ENCODE measurements at regions of chr9 and their contacts with region 1.

Region 1: DNA sequence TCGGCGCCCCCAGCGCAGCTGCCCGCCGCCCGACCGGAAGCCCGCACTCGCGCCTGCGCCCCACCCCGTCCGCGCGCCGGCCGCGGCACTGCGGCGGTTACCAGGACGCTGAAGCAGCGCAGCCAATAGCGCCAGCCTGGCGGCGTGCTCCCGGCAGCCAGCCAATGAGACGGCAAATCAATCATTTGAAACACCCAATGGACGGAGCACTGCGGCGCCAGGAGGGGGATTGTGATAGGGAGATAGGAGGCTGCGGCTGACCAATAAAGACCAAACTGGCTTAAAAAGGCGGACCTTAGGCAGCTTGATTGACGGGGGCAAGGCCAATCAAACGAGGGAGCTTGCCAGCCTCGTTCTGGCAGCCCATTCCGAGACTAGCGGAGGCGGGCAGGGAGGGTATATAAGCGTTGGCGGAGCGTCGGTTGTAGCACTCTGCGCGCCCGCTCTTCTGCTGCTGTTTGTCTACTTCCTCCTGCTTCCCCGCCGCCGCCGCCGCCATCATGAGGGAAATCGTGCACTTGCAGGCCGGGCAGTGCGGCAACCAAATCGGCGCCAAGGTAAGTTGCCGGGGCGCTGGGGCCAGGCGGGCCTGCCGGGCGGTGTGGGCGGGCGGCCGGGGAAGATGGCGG is at the start of gene TUBB4B:
- DNase-seq: peak; percentile 100
- H3K4me3 ChIP-seq: peak within 1 kb of the TSS; percentile 82 to 94 (median 90)
- H3K4me3 Mint-ChIP-seq: peak within 1 kb of the TSS; percentile 84 to 85
- H3K27ac ChIP-seq: peak within 1 kb of the TSS; percentile 68 to 94
- H3K27ac Mint-ChIP-seq: peak within 1 kb of the TSS; percentile 77 to 93 (median 90)
- H3K4me1 ChIP-seq: peaks cover 49 to 63% of the 10 kb centered on the region in 2 donors
- H3K4me1 Mint-ChIP-seq: peaks cover 47% of the 10 kb centered on the region
- H3K27me3 ChIP-seq: no peaks in the 10 kb centered on the region
- H3K27me3 Mint-ChIP-seq: peaks cover 1 to 3% (median 2%) of the 10 kb centered on the region in 3 donors
- CTCF ChIP-seq: no peak
- polyA plus RNA-seq, gene TUBB4B: 58.1 to 284 (median 70.8) TPM

Region 2: DNA sequence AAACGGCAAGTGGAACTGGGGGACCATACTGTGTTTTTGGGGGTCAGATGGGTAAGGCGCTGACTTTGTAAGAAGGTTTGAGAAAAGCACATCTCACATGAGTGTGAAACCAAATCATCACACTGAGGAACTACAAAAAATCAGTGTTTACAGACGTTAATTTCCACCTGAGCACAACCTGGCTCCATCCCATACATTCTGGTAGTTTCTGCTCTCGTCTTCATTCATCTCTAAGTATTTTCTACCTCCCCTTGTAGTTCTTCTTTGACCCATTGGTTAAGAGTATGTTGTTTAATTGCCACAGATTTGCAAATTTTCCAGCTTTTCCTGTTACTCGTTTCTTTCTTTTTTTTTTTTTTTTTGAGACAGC is 117.5 kb before region 1 on chr9:
- intact Hi-C with region 1: loop called in 1 of 2 experiments (anchors 5 kb)
- DNase-seq: no peak
- H3K4me3 ChIP-seq: no peak overlapping the region
- H3K4me3 Mint-ChIP-seq: no peak overlapping the region
- H3K27ac ChIP-seq: no peak overlapping the region
- H3K27ac Mint-ChIP-seq: peak overlapping the region in 1 of 7 donors; percentile 72
- H3K4me1 ChIP-seq: peaks cover 22% of the 10 kb centered on the region in 2 donors
- H3K4me1 Mint-ChIP-seq: peaks cover 19% of the 10 kb centered on the region
- H3K27me3 ChIP-seq: peaks cover 0 to 2% of the 10 kb centered on the region in 2 donors
- H3K27me3 Mint-ChIP-seq: peaks cover 3 to 7% (median 5%) of the 10 kb centered on the region in 3 donors
- CTCF ChIP-seq: no peak

Region 3: DNA sequence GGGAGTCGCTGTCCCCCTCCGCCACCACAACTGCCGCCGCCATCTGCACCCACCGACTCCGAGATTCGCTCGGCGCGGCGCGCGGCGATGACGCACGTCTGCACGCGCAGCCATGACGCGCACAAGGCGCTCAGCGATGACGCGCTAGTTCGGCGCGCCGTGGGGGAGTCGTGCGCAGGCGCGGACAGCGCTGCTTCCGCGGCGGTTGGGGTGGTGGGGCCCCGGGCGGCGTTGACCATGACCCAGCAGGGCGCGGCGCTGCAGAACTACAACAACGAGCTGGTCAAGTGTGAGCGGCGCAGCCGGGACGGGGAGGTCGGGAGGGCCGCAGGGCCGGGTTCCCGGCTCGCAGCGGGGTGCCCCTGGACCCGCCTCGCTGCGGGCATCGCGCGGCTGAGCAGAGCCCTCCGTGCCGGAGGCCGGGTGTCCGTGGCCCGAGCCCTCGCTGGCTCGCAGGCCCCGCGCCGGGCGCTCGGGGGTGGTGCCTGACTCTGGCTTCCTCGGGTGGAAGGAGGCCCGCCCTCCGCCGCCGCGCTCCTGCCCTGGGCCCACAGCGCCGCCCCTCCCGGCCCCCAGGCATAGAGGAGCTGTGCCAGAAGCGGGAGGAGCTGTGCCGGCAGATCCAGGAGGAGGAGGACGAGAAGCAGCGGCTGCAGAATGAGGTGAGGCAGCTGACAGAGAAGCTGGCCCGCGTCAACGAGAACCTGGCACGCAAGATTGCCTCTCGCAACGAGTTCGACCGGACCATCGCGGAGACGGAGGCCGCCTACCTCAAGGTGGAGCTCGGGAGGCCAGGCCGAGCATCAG is 52.3 kb before region 1 on chr9 and contains the starts of genes ANAPC2 and SSNA1:
- intact Hi-C with region 1: loop called in 1 of 2 experiments (anchors 5 kb)
- DNase-seq: peak; percentile 94 to 97 (median 95)
- H3K4me3 ChIP-seq: peak within 1 kb of the TSS; percentile 83 to 95 (median 92)
- H3K4me3 Mint-ChIP-seq: peak within 1 kb of the TSS; percentile 88 to 97
- H3K27ac ChIP-seq: peak within 1 kb of the TSS; percentile 83 to 96
- H3K27ac Mint-ChIP-seq: peak within 1 kb of the TSS; percentile 93 to 98 (median 96)
- H3K4me1 ChIP-seq: peaks cover 28 to 39% of the 10 kb centered on the region in 2 donors
- H3K4me1 Mint-ChIP-seq: peaks cover 32% of the 10 kb centered on the region
- H3K27me3 ChIP-seq: no peaks in the 10 kb centered on the region
- H3K27me3 Mint-ChIP-seq: no peaks in the 10 kb centered on the region
- CTCF ChIP-seq: peak; percentile 42
- polyA plus RNA-seq, gene ANAPC2: 1.9 to 76.8 (median 2.0) TPM
- polyA plus RNA-seq, gene SSNA1: 87.0 to 118 (median 98.3) TPM

Region 4: DNA sequence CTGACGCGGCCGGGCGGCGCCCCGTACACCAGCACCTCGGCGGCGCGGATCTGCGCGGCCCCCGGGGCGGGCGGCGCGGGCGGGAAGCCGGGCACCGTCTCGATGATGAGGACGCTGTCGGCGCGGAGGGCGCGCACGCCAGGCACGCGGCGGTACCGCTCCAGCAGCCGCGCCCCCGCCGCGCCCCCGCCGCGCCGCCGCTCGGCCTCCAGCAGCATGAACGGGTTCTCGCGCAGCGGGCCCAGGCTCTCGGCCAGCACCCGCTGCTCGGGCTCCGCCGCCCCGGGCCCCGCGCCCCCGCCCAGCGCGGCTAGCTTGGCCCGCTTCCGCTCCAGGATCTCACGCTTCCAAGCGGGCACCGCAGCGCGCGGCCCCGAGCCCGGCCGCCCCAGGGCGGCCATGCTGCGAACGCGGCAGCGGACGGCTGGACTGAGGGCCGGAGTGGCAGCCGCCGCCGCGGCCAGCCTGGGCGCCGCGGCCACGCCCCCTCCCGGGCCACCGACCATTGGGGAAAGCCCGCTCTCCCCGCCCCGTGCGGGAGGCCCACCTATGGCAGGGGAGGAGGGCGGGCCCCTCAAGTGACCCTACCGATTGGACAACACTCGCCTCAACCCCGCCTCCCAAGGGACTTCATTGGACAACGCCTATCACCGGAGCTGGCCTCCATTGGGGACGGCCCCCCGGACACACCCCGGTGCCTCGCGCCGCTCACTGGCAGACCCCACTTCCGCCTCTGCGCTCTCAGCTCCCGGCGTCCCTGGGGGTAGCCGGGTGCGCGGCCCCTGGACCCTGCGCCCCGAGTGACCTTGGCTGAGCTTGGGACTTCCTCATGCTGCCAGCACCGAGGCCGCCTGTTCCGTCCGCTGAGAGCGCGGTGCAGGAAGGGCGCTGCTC is 40.4 kb before region 1 on chr9 and contains the start of gene TPRN:
- intact Hi-C with region 1: loop called in 1 of 2 experiments (anchors 5 kb)
- DNase-seq: peak; percentile 98 to 100 (median 99)
- H3K4me3 ChIP-seq: peak within 1 kb of the TSS; percentile 47 to 74 (median 68)
- H3K4me3 Mint-ChIP-seq: peak within 1 kb of the TSS; percentile 81 to 88
- H3K27ac ChIP-seq: peak within 1 kb of the TSS; percentile 77 to 89
- H3K27ac Mint-ChIP-seq: peak within 1 kb of the TSS; percentile 77 to 92 (median 89)
- H3K4me1 ChIP-seq: peaks cover 41 to 55% of the 10 kb centered on the region in 2 donors
- H3K4me1 Mint-ChIP-seq: peaks cover 43% of the 10 kb centered on the region
- H3K27me3 ChIP-seq: peaks cover 0 to 4% of the 10 kb centered on the region in 2 donors
- H3K27me3 Mint-ChIP-seq: peaks cover 0 to 4% (median 0%) of the 10 kb centered on the region in 3 donors
- CTCF ChIP-seq: no peak
- polyA plus RNA-seq, gene TPRN: 0.30 to 4.6 (median 0.46) TPM

Region 5: GRCh38 chr9:137254624-137255447 is 13.9 kb after region 1 on chr9 and contains the start of gene NELFB:
- intact Hi-C with region 1: loop called (anchors 1 to 2 kb)
- DNase-seq: peak; percentile 81 to 87 (median 87)
- H3K4me3 ChIP-seq: peak within 1 kb of the TSS; percentile 65 to 94 (median 82)
- H3K4me3 Mint-ChIP-seq: peak within 1 kb of the TSS; percentile 88 to 95
- H3K27ac ChIP-seq: peak within 1 kb of the TSS in 1 of 2 donors; percentile 75
- H3K27ac Mint-ChIP-seq: peak within 1 kb of the TSS; percentile 46 to 91 (median 73)
- H3K4me1 ChIP-seq: peaks cover 19 to 27% of the 10 kb centered on the region in 2 donors
- H3K4me1 Mint-ChIP-seq: peaks cover 18% of the 10 kb centered on the region
- H3K27me3 ChIP-seq: no peaks in the 10 kb centered on the region
- H3K27me3 Mint-ChIP-seq: peaks cover 0 to 6% (median 6%) of the 10 kb centered on the region in 3 donors
- CTCF ChIP-seq: no peak
- polyA plus RNA-seq, gene NELFB: 17.3 to 44.2 (median 18.8) TPM

Region 6: GRCh38 chr9:137534256-137535117 is 293.5 kb after region 1 on chr9:
- intact Hi-C with region 1: no loop called
- DNase-seq: peak in 2 of 3 donors; percentile 36 to 37
- H3K4me3 ChIP-seq: no peak overlapping the region
- H3K4me3 Mint-ChIP-seq: no peak overlapping the region
- H3K27ac ChIP-seq: no peak overlapping the region
- H3K27ac Mint-ChIP-seq: peak overlapping the region in 2 of 7 donors; percentile 66 to 69
- H3K4me1 ChIP-seq: no peaks in the 10 kb centered on the region
- H3K4me1 Mint-ChIP-seq: peaks cover 20% of the 10 kb centered on the region
- H3K27me3 ChIP-seq: no peaks in the 10 kb centered on the region
- H3K27me3 Mint-ChIP-seq: no peaks in the 10 kb centered on the region
- CTCF ChIP-seq: peak; percentile 72

Measured in CD14-positive monocyte (primary cell).